ENCODE measurements at regions of chr22 and their contacts with region 1.

Region 1: DNA sequence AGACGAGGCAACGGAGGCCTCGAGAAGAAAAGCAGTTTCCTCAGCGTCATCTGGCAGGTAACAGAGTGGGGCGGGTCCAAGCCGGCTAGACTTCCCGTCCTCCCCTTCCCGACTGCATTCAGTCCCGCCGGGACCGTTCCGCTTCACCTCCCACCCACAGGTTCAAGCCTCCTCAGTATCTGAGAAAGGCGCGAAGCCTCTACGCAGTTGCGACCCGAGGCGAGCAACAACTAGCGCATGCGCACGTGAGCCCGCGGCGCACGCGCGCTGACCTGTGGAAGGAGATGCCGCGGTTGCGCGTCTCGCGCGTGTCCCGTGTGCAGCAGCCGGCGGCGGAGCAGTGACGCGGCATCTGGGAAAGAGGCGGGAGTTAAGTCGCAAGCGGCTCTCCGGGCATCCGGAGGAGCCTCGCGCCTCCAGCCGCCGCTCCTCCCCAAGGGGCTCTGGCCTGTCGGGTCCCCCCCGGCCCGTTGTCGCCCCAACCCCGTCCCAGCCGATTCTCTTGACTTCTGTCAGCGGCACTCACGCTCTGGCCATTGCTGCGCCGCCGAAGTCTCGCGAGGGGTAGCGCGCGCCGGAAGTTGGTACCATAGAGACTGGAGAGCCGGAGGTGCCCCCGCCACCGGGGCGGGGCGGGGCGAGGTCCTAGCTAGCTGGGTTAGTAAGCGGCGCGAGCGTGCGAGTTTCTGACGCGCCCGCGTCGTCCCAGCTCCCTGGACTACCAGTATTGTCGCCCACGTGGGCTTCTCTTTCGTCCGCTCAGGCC is at the start of gene THAP7:
- DNase-seq: peak; percentile 94 to 98 (median 98)
- ATAC-seq: peak; percentile 95
- H3K4me3 ChIP-seq: peak within 1 kb of the TSS; percentile 79
- H3K4me3 Mint-ChIP-seq: peak within 1 kb of the TSS; percentile 94 to 99 (median 96)
- H3K27ac ChIP-seq: peak within 1 kb of the TSS; percentile 94
- H3K27ac Mint-ChIP-seq: peak within 1 kb of the TSS; percentile 98 to 100 (median 99)
- H3K4me1 ChIP-seq: peaks cover 24 to 26% of the 10 kb centered on the region in 2 donors
- H3K4me1 Mint-ChIP-seq: peaks cover 14 to 36% (median 20%) of the 10 kb centered on the region in 7 donors
- H3K27me3 ChIP-seq: no peaks in the 10 kb centered on the region
- H3K27me3 Mint-ChIP-seq: no peaks in the 10 kb centered on the region
- total RNA-seq, gene THAP7: 25.8 to 73.3 (median 64.7) TPM

Region 2: DNA sequence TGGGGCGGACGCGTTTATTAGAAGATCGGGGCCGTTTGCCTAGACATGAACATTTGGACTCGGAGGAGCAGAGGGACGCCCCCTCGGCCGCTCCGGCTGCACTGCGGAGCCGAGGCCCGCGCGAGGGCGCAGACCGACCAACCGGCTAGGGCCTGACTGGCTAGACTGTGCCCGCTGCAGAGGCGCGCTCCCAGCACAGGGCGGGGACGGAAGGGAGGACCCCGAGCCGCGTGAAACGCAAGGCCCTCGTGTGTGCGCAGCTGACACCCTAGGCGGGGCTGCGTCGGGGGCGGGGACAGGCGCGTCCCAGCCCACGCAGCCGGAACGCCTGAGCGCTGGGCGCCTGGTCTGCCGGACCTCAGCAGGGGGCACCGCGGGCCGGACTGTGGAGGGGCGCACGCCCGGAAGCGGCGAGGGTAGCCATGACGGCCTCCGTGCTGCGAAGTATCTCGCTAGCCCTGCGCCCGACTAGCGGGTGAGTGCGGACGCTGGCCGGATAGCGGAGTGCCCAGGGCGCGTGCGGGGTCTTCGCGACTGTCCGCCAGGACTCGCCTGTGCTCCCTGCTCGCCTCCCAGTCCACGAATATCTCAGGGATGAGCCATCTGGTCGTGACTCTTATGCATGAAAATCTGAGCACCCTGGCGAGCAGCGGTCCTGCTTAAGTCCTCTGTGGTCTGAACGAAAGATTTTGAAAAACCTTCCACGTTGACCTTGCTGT is 1569.5 kb before region 1 on chr22 and contains the start of gene MRPL40:
- CTCF ChIA-PET with region 1: no interaction called
- POLR2A ChIA-PET with region 1: no interaction called
- intact Hi-C with region 1: loop called in 1 of 2 experiments (anchors 10 kb)
- DNase-seq: peak; percentile 70 to 92 (median 84)
- ATAC-seq: peak; percentile 90
- H3K4me3 ChIP-seq: peak within 1 kb of the TSS; percentile 97
- H3K4me3 Mint-ChIP-seq: peak within 1 kb of the TSS; percentile 82 to 94 (median 91)
- H3K27ac ChIP-seq: peak within 1 kb of the TSS; percentile 80
- H3K27ac Mint-ChIP-seq: peak within 1 kb of the TSS; percentile 80 to 97 (median 91)
- H3K4me1 ChIP-seq: peaks cover 16 to 23% of the 10 kb centered on the region in 2 donors
- H3K4me1 Mint-ChIP-seq: peaks cover 27 to 50% (median 40%) of the 10 kb centered on the region in 7 donors
- H3K27me3 ChIP-seq: no peaks in the 10 kb centered on the region
- H3K27me3 Mint-ChIP-seq: no peaks in the 10 kb centered on the region
- total RNA-seq, gene MRPL40: 11.5 to 21.2 (median 17.0) TPM

Region 3: GRCh38 chr22:20829491-20830134 is 172.1 kb before region 1 on chr22:
- CTCF ChIA-PET with region 1: no interaction called
- POLR2A ChIA-PET with region 1: no interaction called
- intact Hi-C with region 1: no loop called
- DNase-seq: no peak
- ATAC-seq: no peak
- H3K4me3 ChIP-seq: no peak overlapping the region
- H3K4me3 Mint-ChIP-seq: no peak overlapping the region
- H3K27ac ChIP-seq: no peak overlapping the region
- H3K27ac Mint-ChIP-seq: peak overlapping the region in 2 of 9 donors; percentile 53 to 70
- H3K4me1 ChIP-seq: no peaks in the 10 kb centered on the region
- H3K4me1 Mint-ChIP-seq: peaks cover 0 to 5% (median under 1%) of the 10 kb centered on the region in 7 donors
- H3K27me3 ChIP-seq: no peaks in the 10 kb centered on the region
- H3K27me3 Mint-ChIP-seq: no peaks in the 10 kb centered on the region

Region 4: GRCh38 chr22:20916983-20917810 is 84.5 kb before region 1 on chr22 and contains the start of gene CRKL:
- CTCF ChIA-PET with region 1: interaction called, 3 read pairs
- POLR2A ChIA-PET with region 1: no interaction called
- intact Hi-C with region 1: loop called (anchors 1 kb)
- DNase-seq: peak; percentile 92 to 96 (median 94)
- ATAC-seq: peak; percentile 98
- H3K4me3 ChIP-seq: peak within 1 kb of the TSS; percentile 87
- H3K4me3 Mint-ChIP-seq: peak within 1 kb of the TSS; percentile 83 to 99 (median 97)
- H3K27ac ChIP-seq: peak within 1 kb of the TSS; percentile 92
- H3K27ac Mint-ChIP-seq: peak within 1 kb of the TSS; percentile 77 to 97 (median 90)
- H3K4me1 ChIP-seq: peaks cover 4 to 12% of the 10 kb centered on the region in 2 donors
- H3K4me1 Mint-ChIP-seq: peaks cover 32 to 50% (median 40%) of the 10 kb centered on the region in 7 donors
- H3K27me3 ChIP-seq: no peaks in the 10 kb centered on the region
- H3K27me3 Mint-ChIP-seq: no peaks in the 10 kb centered on the region
- total RNA-seq, gene CRKL: 38.9 to 82.7 (median 77.8) TPM

Region 5: DNA sequence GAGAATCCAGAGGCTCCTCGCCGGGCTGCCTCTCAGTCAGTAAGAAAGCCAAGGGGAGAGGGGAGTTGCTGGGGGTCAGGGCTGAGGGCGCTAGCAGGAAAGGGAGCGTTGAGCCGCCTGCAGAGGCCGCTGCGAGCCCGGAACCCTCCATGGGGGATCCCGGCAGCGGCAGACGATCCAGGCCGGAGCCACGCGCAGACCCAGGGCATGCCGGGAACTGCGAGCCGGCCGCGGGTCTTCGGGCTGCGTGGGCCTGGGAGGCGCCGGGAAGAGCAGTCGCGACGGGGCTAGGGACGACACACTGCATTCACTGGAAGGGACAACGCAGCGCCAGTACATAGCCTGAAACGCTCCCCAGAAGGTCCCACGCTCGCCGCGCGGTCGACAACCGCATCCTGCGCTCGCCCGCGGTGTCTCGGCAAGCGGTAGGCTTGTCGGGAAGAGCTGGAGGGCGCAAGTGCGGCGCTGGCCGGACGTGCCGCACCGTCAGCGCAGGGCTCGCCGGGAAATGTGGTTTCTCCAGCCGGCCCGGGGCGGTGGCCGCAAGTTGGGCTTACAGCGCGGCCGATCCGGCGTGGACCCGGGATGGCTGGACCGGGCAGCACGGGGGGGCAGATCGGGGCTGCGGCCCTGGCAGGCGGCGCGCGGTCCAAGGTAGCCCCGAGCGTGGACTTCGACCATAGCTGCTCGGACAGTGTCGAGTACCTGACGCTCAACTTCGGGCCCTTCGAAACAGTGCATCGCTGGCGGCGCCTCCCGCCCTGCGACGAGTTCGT is 19.8 kb before region 1 on chr22 and contains the start of gene LZTR1:
- CTCF ChIA-PET with region 1: no interaction called
- POLR2A ChIA-PET with region 1: interaction called, 59 read pairs
- intact Hi-C with region 1: loop called (anchors 1 to 2 kb)
- DNase-seq: peak; percentile 47 to 80 (median 63)
- ATAC-seq: peak; percentile 86
- H3K4me3 ChIP-seq: peak within 1 kb of the TSS; percentile 80
- H3K4me3 Mint-ChIP-seq: peak within 1 kb of the TSS; percentile 89 to 97 (median 93)
- H3K27ac ChIP-seq: peak within 1 kb of the TSS; percentile 84
- H3K27ac Mint-ChIP-seq: peak within 1 kb of the TSS; percentile 86 to 97 (median 92)
- H3K4me1 ChIP-seq: peaks cover 15 to 32% of the 10 kb centered on the region in 2 donors
- H3K4me1 Mint-ChIP-seq: peaks cover 33 to 50% (median 43%) of the 10 kb centered on the region in 7 donors
- H3K27me3 ChIP-seq: no peaks in the 10 kb centered on the region
- H3K27me3 Mint-ChIP-seq: no peaks in the 10 kb centered on the region
- total RNA-seq, gene LZTR1: 61.8 to 104 (median 74.2) TPM

Region 6: DNA sequence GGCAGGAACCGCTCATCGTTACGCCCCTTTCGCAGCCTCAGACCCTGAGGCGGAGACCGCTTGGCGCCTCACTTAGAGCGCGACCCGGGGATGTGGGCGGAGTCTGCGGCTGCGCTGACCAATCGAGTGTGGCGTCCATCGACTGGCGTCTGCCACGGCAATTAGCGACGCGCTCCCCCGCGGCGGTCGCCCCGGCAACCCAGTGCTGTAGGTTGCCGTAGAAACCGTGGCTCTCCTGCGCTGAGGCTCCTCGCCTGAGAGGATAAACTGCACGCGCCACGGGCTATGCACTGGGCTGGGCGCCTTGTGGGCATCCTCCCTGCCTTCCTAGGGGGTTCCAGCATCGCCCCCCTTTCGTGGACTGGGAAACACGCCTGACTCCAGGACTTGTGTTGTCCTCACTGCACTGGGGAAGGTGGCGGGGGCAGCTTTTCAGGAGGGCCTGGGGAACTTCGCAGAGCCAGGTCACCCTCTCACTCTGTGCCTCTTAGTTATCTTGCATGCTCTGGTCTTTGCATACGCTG is 12.5 kb after region 1 on chr22:
- CTCF ChIA-PET with region 1: interaction called, 3 read pairs
- POLR2A ChIA-PET with region 1: interaction called, 12 read pairs
- intact Hi-C with region 1: loop called (anchors 1 kb)
- DNase-seq: peak; percentile 62 to 83 (median 70)
- ATAC-seq: peak; percentile 93
- H3K4me3 ChIP-seq: peak overlapping the region; percentile 68
- H3K4me3 Mint-ChIP-seq: peak overlapping the region; percentile 82 to 89 (median 85)
- H3K27ac ChIP-seq: peak overlapping the region; percentile 59
- H3K27ac Mint-ChIP-seq: peak overlapping the region; percentile 73 to 96 (median 89)
- H3K4me1 ChIP-seq: peaks cover 13 to 17% of the 10 kb centered on the region in 2 donors
- H3K4me1 Mint-ChIP-seq: peaks cover 17 to 36% (median 29%) of the 10 kb centered on the region in 7 donors
- H3K27me3 ChIP-seq: no peaks in the 10 kb centered on the region
- H3K27me3 Mint-ChIP-seq: peaks cover 0 to 21% (median 0%) of the 10 kb centered on the region in 5 donors

Region 7: DNA sequence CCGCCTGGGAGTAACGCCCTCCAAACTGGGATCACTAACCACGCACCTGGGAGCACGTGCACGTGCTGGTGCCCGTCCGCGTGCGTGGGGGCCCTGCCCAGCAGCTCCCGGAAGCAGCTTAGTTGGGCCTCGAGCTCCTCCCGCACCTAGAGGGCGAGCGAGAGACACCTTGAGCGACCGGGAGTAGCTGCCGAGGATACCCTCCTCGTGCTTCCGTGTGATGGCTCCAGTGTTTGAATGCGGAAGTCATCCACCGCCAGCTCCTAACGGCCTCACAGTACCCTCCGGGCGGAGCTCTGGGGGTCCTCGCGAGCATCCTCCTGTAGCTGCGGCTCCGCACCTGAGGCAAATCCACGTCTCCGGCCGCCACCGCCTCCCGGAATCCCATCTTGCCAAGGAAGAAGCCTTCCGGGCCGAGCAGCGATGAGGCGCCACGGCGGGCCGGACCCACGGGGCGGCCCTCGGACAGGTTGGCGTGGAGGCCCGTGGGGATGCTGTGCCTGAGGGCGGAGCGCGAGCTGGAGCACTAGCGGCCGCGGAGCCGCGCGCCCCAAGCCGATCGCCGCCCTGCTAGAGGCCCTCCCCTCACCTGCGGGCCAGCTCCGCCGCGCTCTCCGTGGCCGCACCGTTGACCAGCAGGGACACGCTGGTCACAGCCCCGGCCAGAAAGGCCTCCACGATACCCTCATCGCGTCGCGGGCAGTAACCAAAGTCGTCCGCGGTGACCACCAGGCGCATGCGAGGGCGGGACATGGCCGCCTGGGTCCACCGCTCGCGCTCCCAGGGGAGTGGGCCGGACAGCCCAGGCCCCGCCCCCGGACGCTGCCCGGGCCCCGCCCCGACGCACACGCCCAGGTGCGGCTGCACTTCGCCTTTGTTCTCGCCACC is 627.8 kb after region 1 on chr22 and contains the start of gene YDJC:
- CTCF ChIA-PET with region 1: no interaction called
- POLR2A ChIA-PET with region 1: interaction called, 3 read pairs
- intact Hi-C with region 1: loop called in 1 of 2 experiments (anchors 1 kb)
- DNase-seq: peak; percentile 88 to 97 (median 93)
- ATAC-seq: peak; percentile 95
- H3K4me3 ChIP-seq: peak within 1 kb of the TSS; percentile 88
- H3K4me3 Mint-ChIP-seq: peak within 1 kb of the TSS; percentile 87 to 97 (median 91)
- H3K27ac ChIP-seq: peak within 1 kb of the TSS; percentile 92
- H3K27ac Mint-ChIP-seq: peak within 1 kb of the TSS; percentile 84 to 97 (median 93)
- H3K4me1 ChIP-seq: peaks cover 6 to 26% of the 10 kb centered on the region in 2 donors
- H3K4me1 Mint-ChIP-seq: peaks cover 29 to 44% (median 38%) of the 10 kb centered on the region in 7 donors
- H3K27me3 ChIP-seq: no peaks in the 10 kb centered on the region
- H3K27me3 Mint-ChIP-seq: no peaks in the 10 kb centered on the region
- total RNA-seq, gene YDJC: 29.0 to 56.0 (median 38.0) TPM